Prostate gland (tissue), 2 donors: ENCODE measurements at regions of chr10 and their contacts with region 1.

Region 1: GRCh38 chr10:129096065-129096984 is 370.7 kb upstream of the MGMT start:
- DNase-seq: peak; percentile 40
- H3K4me3 ChIP-seq: no peak overlapping the region
- H3K27ac ChIP-seq: peak overlapping the region in 1 of 2 donors; percentile 41
- H3K4me1 ChIP-seq: no peaks in the 10 kb centered on the region
- H3K27me3 ChIP-seq: no peaks in the 10 kb centered on the region
- CTCF ChIP-seq: no peak
- POLR2A ChIP-seq: no peak

Region 2: DNA sequence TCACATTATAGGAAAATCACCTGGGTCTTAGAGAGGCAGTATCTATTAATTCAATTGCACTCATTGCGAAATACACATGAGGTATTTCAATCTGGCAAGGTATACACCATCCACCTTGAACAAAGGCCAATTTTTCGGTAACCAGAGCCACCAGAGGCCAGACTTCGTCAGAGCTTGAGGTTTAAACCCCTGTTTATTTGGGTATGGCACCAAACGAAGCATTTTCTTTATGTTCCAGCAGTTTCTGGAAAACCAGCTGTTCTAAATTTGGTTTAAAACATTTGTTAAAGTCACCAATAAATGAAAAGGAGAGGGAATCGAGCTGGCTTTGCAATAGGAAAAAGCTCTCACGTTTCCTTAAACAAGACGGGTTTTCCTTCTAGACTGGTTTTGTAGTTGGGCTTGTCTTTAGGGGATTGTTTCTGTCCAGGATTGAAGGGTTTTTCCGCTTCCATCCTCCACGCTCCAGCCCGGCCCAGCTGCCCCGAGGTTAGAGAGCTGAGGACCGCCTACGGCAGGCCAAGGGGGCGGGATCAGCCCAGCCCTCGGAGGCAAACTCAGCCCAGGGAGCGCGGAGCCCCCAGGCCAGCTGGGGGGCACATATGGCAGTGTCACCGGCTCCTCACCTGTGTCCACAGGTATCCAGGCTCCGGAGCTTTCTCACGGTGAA is 168.7 kb before region 1 on chr10:
- intact Hi-C with region 1: loop called (anchors 10 kb)
- DNase-seq: peak; percentile 48
- H3K4me3 ChIP-seq: no peak overlapping the region
- H3K27ac ChIP-seq: peak overlapping the region in 1 of 2 donors; percentile 26
- H3K4me1 ChIP-seq: no peaks in the 10 kb centered on the region
- H3K27me3 ChIP-seq: no peaks in the 10 kb centered on the region
- CTCF ChIP-seq: no peak
- POLR2A ChIP-seq: no peak